AG04449 (cell line): ENCODE measurements at regions of chr16 and their contacts with region 1.

Region 1: GRCh38 chr16:14186007-14186794 is 115.1 kb downstream of the MRTFB start:
- DNase-seq: no peak
- H3K4me3 ChIP-seq: peak overlapping the region; percentile 58
- CTCF ChIP-seq: peak; percentile 47

Region 2: GRCh38 chr16:14199624-14200023 is 13.4 kb after region 1 on chr16:
- CTCF ChIA-PET with region 1: interaction called, 13 read pairs
- POLR2A ChIA-PET with region 1: interaction called, 3 read pairs
- DNase-seq: no peak
- H3K4me3 ChIP-seq: no peak overlapping the region
- CTCF ChIP-seq: no peak

Region 3: GRCh38 chr16:14449790-14450480 is 263.7 kb after region 1 on chr16:
- CTCF ChIA-PET with region 1: no interaction called
- POLR2A ChIA-PET with region 1: no interaction called
- DNase-seq: peak; percentile 42
- H3K4me3 ChIP-seq: no peak overlapping the region
- CTCF ChIP-seq: no peak